ENCODE measurements at regions of chr5 and their contacts with region 1.

Region 1: GRCh38 chr5:136769900-136770684 is 404.7 kb upstream of the TRPC7 start:
- DNase-seq: peak; percentile 81
- H3K4me3 Mint-ChIP-seq: no peak overlapping the region
- H3K27ac Mint-ChIP-seq: no peak overlapping the region
- H3K4me1 Mint-ChIP-seq: peaks cover 7% of the 10 kb centered on the region
- H3K27me3 Mint-ChIP-seq: peaks cover 84% of the 10 kb centered on the region
- CTCF ChIP-seq: peak; percentile 73

Region 2: GRCh38 chr5:136364307-136364706 is 405.8 kb before region 1 on chr5:
- CTCF ChIA-PET with region 1: interaction called, 5 read pairs
- intact Hi-C with region 1: loop called (anchors 2 kb)
- DNase-seq: peak; percentile 31
- H3K4me3 Mint-ChIP-seq: no peak overlapping the region
- H3K27ac Mint-ChIP-seq: no peak overlapping the region
- H3K4me1 Mint-ChIP-seq: no peaks in the 10 kb centered on the region
- H3K27me3 Mint-ChIP-seq: peaks cover 39% of the 10 kb centered on the region
- CTCF ChIP-seq: peak; percentile 69

Region 3: DNA sequence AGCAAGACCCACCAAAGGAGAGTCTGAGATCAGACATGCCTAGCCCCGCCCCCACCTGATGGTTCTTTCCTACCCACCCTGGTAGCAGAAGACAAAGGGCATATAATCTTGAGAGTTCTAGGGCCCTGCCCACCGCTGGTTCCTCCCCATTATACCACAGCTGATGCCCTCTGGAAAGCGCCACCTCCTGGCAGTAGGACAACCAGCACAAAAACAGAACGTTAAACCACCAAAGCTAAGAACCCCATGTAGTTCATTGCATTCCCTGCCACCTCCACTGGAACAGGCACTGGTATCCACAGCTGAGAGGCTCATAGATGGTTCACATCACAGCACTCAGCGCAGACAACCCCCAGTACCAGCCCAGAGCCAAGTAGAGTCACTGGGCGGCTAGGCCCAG is 323.5 kb before region 1 on chr5:
- CTCF ChIA-PET with region 1: no interaction called
- intact Hi-C with region 1: no loop called
- DNase-seq: no peak
- H3K4me3 Mint-ChIP-seq: no peak overlapping the region
- H3K27ac Mint-ChIP-seq: no peak overlapping the region
- H3K4me1 Mint-ChIP-seq: no peaks in the 10 kb centered on the region
- H3K27me3 Mint-ChIP-seq: peaks cover 32% of the 10 kb centered on the region
- CTCF ChIP-seq: no peak

Region 4: GRCh38 chr5:136638077-136638476 is 132.0 kb before region 1 on chr5:
- CTCF ChIA-PET with region 1: interaction called, 10 read pairs
- intact Hi-C with region 1: no loop called
- DNase-seq: no peak
- H3K4me3 Mint-ChIP-seq: no peak overlapping the region
- H3K27ac Mint-ChIP-seq: no peak overlapping the region
- H3K4me1 Mint-ChIP-seq: no peaks in the 10 kb centered on the region
- H3K27me3 Mint-ChIP-seq: peaks cover 82% of the 10 kb centered on the region
- CTCF ChIP-seq: no peak

Region 5: DNA sequence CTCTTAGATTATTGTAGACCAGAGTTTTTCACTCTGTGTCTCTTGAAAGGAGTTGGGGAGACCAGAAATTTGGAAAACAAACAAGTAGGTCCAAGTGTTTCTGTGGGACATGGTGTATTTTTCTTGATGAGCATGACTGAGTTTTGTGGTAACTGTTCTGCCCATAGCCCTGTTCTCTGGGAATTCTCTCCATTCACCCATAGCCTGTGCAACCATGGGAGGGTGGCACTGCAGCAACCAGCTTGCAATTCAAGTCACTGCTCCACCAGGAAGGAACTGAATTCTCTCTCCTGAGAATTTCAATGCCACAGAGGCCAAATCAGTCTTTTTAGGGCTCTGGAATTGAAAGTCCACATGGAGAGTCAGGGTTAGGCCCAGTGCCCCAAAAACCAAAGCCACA is 70.5 kb after region 1 on chr5:
- CTCF ChIA-PET with region 1: no interaction called
- intact Hi-C with region 1: no loop called
- DNase-seq: no peak
- H3K4me3 Mint-ChIP-seq: no peak overlapping the region
- H3K27ac Mint-ChIP-seq: no peak overlapping the region
- H3K4me1 Mint-ChIP-seq: no peaks in the 10 kb centered on the region
- H3K27me3 Mint-ChIP-seq: peaks cover 45% of the 10 kb centered on the region
- CTCF ChIP-seq: no peak

Measured in Calu3 (cell line).